Ovary (tissue), 10 donors: ENCODE measurements at regions of chr11 and their contacts with region 1.

Region 1: DNA sequence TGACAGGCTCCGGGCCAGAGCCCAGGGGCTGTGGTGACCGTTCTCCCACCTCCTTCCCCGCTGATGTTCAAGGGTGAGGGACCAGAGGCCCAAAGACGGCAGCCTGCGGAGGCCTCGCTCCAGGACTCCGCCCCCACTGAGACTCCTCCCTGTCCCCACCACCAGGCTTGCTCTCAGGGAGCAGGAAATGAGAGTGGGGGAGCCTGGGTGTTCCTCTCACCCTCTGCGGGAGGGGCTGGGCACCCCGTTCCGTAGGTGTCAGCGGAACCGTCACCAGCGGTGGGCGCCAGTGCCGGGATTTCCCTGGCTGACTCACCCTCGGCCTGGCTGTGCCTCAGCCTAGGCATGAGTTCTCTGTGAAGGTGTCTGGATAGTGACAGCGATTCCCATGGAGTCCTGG is 15.7 kb downstream of the DAGLA start:
- DNase-seq: peak; percentile 59 to 81 (median 68)
- H3K4me3 ChIP-seq: no peak overlapping the region
- H3K27ac ChIP-seq: peak overlapping the region; percentile 27 to 71
- H3K4me1 ChIP-seq: peaks cover 10% of the 10 kb centered on the region
- H3K27me3 ChIP-seq: no peaks in the 10 kb centered on the region
- CTCF ChIP-seq: peak in 1 of 3 donors; percentile 26
- EP300 ChIP-seq: no peak
- POLR2A ChIP-seq: no peak

Region 2: GRCh38 chr11:61332797-61333549 is 362.9 kb before region 1 on chr11 and contains the starts of genes DDB1 and TKFC:
- intact Hi-C with region 1: no loop called
- DNase-seq: peak; percentile 96 to 97 (median 96)
- H3K4me3 ChIP-seq: peak within 1 kb of the TSS; percentile 99
- H3K27ac ChIP-seq: peak within 1 kb of the TSS; percentile 88 to 92
- H3K4me1 ChIP-seq: peaks cover 28% of the 10 kb centered on the region
- H3K27me3 ChIP-seq: no peaks in the 10 kb centered on the region
- CTCF ChIP-seq: peak in 1 of 3 donors; percentile 27
- EP300 ChIP-seq: no peak
- POLR2A ChIP-seq: peak; percentile 93
- total RNA-seq, gene DDB1: 117 to 264 (median 217) TPM
- total RNA-seq, gene TKFC: 19.0 to 41.4 (median 36.3) TPM

Region 3: DNA sequence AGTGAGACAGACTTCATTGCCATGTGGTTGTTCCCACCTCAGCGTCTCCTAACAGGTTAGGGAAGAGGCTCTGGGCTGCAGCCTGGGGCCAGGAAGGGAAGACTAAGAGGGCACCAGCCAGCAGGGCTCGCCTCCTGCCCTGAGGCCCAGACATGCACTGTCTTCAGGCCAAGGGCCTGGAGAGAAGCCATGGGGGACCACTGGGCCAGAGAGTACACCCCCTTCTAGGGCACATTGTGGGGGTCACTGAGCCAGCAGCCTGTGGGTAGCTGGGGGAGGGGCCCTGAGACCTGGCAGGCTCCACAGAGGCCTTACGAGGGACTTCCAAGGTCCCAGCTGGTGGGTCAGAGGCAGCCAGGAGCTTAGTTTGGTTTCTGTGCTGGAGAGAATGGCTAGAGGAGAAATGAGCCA is 31.5 kb after region 1 on chr11:
- intact Hi-C with region 1: loop called in 1 of 4 experiments (anchors 1 kb)
- DNase-seq: peak in 2 of 5 donors; percentile 49 to 70
- H3K4me3 ChIP-seq: no peak overlapping the region
- H3K27ac ChIP-seq: peak overlapping the region in 1 of 2 donors; percentile 26
- H3K4me1 ChIP-seq: peaks cover 12% of the 10 kb centered on the region
- H3K27me3 ChIP-seq: no peaks in the 10 kb centered on the region
- CTCF ChIP-seq: no peak
- EP300 ChIP-seq: no peak
- POLR2A ChIP-seq: no peak

Region 4: GRCh38 chr11:61841636-61842527 is 146.0 kb after region 1 on chr11:
- intact Hi-C with region 1: no loop called
- DNase-seq: no peak
- H3K4me3 ChIP-seq: no peak overlapping the region
- H3K27ac ChIP-seq: no peak overlapping the region
- H3K4me1 ChIP-seq: no peaks in the 10 kb centered on the region
- H3K27me3 ChIP-seq: no peaks in the 10 kb centered on the region
- CTCF ChIP-seq: no peak
- EP300 ChIP-seq: no peak
- POLR2A ChIP-seq: no peak